ENCODE measurements at regions of chr11 and their contacts with region 1.

Region 1: GRCh38 chr11:86041975-86042378 is 26.9 kb downstream of the PICALM start:
- DNase-seq: peak; percentile 55 to 79
- H3K4me3 ChIP-seq: no peak overlapping the region
- H3K27ac ChIP-seq: no peak overlapping the region
- H3K4me1 ChIP-seq: peaks cover 34% of the 10 kb centered on the region
- H3K27me3 ChIP-seq: no peaks in the 10 kb centered on the region
- CTCF ChIP-seq: peak; percentile 100

Region 2: DNA sequence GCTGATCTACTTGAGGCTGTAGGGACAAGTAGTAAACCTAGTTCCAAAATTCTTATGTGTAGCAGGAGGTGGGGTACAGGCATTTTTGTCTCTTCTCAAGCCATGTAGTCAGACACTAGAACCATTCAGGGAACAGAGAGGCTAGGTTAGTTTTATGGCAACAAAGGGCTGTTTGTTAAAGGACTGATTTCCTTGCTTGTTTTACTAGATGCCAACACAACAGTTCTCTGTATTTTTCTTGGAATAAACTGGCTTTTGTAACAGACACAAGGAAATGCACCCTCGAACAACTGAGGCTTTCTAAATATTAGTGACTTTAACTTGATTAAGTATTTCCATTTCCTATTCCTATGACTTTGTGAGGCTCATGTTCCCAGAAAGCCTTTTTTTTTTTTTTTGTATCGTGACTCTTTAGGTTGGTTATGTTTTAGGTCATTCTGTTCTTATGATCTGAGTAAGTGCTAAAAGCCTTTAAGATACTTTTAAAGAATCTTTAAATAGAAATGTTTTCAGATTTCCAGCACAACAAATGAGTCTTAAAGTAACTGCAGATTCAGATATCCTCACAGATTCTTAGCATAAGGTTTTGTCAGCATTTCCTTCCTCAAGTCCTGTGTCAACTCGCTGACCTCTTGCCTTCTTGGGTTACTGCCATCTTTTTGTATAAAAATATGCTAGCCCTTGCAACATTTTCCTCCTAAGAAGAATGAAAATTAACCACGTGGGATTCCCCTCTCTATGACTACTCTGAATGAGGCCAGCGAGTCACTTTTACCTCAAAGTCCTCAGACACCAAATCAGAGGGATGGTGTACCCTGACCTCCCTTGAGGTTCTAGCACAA is 94.3 kb before region 1 on chr11:
- CTCF ChIA-PET with region 1: no interaction called
- POLR2A ChIA-PET with region 1: no interaction called
- intact Hi-C with region 1: no loop called
- DNase-seq: peak; percentile 38 to 86
- H3K4me3 ChIP-seq: no peak overlapping the region
- H3K27ac ChIP-seq: peak overlapping the region; percentile 35; the same call in 1 of the 2 replicates
- H3K4me1 ChIP-seq: peaks cover 26% of the 10 kb centered on the region
- H3K27me3 ChIP-seq: no peaks in the 10 kb centered on the region
- CTCF ChIP-seq: no peak

Region 3: GRCh38 chr11:86061483-86062205 is 19.7 kb after region 1 on chr11:
- CTCF ChIA-PET with region 1: no interaction called
- POLR2A ChIA-PET with region 1: no interaction called
- intact Hi-C with region 1: no loop called
- DNase-seq: no peak
- H3K4me3 ChIP-seq: no peak overlapping the region
- H3K27ac ChIP-seq: no peak overlapping the region
- H3K4me1 ChIP-seq: peaks cover 40% of the 10 kb centered on the region
- H3K27me3 ChIP-seq: no peaks in the 10 kb centered on the region
- CTCF ChIP-seq: no peak

Region 4: DNA sequence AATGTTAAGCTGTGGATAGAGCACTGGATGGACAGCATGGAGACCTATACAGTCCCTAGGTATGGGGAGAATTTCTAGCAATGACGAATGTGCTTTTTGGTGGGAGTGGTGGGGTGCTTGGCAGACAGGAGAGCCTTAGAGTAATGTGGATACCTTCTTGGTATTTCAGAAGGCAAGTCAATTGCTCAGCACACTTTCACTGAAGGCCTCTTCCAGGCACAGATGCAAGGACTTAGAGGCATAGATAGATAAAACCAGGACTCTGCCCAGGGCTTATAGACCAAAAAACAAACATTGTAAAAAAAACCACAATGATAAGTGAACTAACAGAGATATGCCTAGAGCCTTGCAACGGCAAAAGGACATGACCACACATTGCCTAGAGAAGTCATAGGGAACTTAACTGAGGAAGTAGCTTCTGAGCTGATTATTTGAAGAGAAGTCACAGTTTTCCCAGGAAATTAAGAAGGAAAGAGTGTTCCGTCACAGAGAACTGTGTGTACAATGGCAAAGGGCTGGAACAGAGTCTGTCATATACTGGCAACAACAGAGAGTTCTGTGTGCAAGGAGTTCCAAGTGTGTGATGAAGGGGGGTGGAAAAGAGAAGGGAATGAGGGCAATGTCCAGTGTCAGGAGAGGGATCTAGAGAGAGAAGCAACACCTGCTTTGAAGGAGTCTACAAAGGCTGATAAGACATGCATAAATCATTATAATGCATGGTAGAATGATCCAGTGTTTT is 92.8 kb after region 1 on chr11:
- CTCF ChIA-PET with region 1: no interaction called
- POLR2A ChIA-PET with region 1: interaction called, 25 read pairs
- intact Hi-C with region 1: no loop called
- DNase-seq: peak in 1 of 2 experiments; percentile 69
- H3K4me3 ChIP-seq: no peak overlapping the region
- H3K27ac ChIP-seq: no peak overlapping the region
- H3K4me1 ChIP-seq: peaks cover 18% of the 10 kb centered on the region
- H3K27me3 ChIP-seq: no peaks in the 10 kb centered on the region
- CTCF ChIP-seq: no peak

Region 5: GRCh38 chr11:86218125-86219084 is 176.4 kb after region 1 on chr11:
- CTCF ChIA-PET with region 1: no interaction called
- POLR2A ChIA-PET with region 1: no interaction called
- intact Hi-C with region 1: loop called (anchors 1 kb)
- DNase-seq: peak; percentile 46 to 56
- H3K4me3 ChIP-seq: no peak overlapping the region
- H3K27ac ChIP-seq: no peak overlapping the region
- H3K4me1 ChIP-seq: 0 out of 2 replicates have a peak, but pooled peaks cover 6% of the 10 kb centered on the region
- H3K27me3 ChIP-seq: no peaks in the 10 kb centered on the region
- CTCF ChIP-seq: peak; percentile 90

Region 6: GRCh38 chr11:86274503-86274902 is 232.5 kb after region 1 on chr11:
- CTCF ChIA-PET with region 1: no interaction called
- POLR2A ChIA-PET with region 1: no interaction called
- intact Hi-C with region 1: no loop called
- DNase-seq: no peak
- H3K4me3 ChIP-seq: no peak overlapping the region
- H3K27ac ChIP-seq: no peak overlapping the region
- H3K4me1 ChIP-seq: no peaks in the 10 kb centered on the region
- H3K27me3 ChIP-seq: no peaks in the 10 kb centered on the region
- CTCF ChIP-seq: peak; percentile 48; the same call in 1 of the 2 replicates

Region 7: GRCh38 chr11:86291466-86292262 is 249.7 kb after region 1 on chr11:
- CTCF ChIA-PET with region 1: no interaction called
- POLR2A ChIA-PET with region 1: no interaction called
- intact Hi-C with region 1: loop called (anchors 10 kb)
- DNase-seq: peak; percentile 41 to 60
- H3K4me3 ChIP-seq: no peak overlapping the region
- H3K27ac ChIP-seq: no peak overlapping the region
- H3K4me1 ChIP-seq: no peaks in the 10 kb centered on the region
- H3K27me3 ChIP-seq: no peaks in the 10 kb centered on the region
- CTCF ChIP-seq: peak; percentile 95